Calu3 (cell line): ENCODE measurements at regions of chr18 and their contacts with region 1.

Region 1: DNA sequence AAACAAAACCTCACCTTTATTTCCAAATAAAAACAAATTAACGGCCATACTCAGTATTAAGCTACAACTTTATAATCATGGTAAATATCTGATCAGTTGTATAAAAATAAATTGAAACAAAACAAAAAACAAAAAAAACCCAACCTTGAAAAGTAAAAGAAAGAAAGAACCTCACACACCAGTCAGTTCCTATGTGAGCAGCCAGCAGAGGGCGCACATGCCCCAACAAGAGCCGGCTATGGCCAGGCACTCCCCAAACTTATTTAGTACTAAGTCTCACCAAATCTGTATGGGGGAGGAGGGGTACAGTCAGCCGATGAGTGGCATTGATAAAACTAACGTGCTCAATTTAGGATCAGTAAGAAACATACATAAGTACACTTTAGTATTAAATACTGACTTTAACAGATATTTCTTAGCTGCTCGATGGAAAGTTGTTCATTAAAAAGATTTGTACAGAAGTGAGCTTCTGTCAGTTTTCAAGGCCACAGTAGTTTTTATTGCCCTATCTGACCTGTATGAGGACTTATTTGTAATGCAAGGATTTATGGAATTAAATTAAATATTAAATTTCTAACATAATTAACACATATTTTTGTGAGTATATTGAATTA is 172.6 kb downstream of the TCF4 start:
- DNase-seq: peak; percentile 78
- H3K4me3 Mint-ChIP-seq: no peak overlapping the region
- H3K27ac Mint-ChIP-seq: no peak overlapping the region
- H3K4me1 Mint-ChIP-seq: no peaks in the 10 kb centered on the region
- H3K27me3 Mint-ChIP-seq: no peaks in the 10 kb centered on the region
- CTCF ChIP-seq: peak; percentile 84

Region 2: GRCh38 chr18:55289775-55290174 is 125.6 kb before region 1 on chr18:
- CTCF ChIA-PET with region 1: no interaction called
- intact Hi-C with region 1: no loop called
- DNase-seq: no peak
- H3K4me3 Mint-ChIP-seq: no peak overlapping the region
- H3K27ac Mint-ChIP-seq: no peak overlapping the region
- H3K4me1 Mint-ChIP-seq: no peaks in the 10 kb centered on the region
- H3K27me3 Mint-ChIP-seq: peaks cover 11% of the 10 kb centered on the region
- CTCF ChIP-seq: no peak

Region 3: GRCh38 chr18:55485666-55486065 is 70.3 kb after region 1 on chr18:
- CTCF ChIA-PET with region 1: no interaction called
- intact Hi-C with region 1: no loop called
- DNase-seq: no peak
- H3K4me3 Mint-ChIP-seq: no peak overlapping the region
- H3K27ac Mint-ChIP-seq: no peak overlapping the region
- H3K4me1 Mint-ChIP-seq: no peaks in the 10 kb centered on the region
- H3K27me3 Mint-ChIP-seq: no peaks in the 10 kb centered on the region
- CTCF ChIP-seq: no peak

Region 4: DNA sequence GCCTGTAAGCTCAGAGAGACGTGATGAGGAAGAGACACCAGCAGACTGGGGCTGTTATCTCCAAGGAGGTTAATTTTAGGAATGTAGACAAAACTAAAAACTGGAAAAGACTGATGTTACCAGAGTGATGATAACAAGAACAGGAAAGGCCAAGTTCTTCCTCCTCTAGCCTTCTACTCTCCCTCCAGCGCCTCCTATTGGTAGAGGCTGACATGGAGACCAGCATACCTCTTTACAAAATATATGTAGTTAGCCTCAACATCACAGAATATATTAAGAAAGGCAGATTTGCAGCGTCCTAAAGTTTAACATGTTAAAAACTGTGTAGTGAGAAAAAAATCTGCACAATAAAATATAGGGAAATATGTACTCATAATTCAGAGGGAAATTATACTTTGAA is 106.6 kb after region 1 on chr18:
- CTCF ChIA-PET with region 1: no interaction called
- intact Hi-C with region 1: no loop called
- DNase-seq: peak; percentile 20
- H3K4me3 Mint-ChIP-seq: no peak overlapping the region
- H3K27ac Mint-ChIP-seq: no peak overlapping the region
- H3K4me1 Mint-ChIP-seq: no peaks in the 10 kb centered on the region
- H3K27me3 Mint-ChIP-seq: no peaks in the 10 kb centered on the region
- CTCF ChIP-seq: peak; percentile 35

Region 5: DNA sequence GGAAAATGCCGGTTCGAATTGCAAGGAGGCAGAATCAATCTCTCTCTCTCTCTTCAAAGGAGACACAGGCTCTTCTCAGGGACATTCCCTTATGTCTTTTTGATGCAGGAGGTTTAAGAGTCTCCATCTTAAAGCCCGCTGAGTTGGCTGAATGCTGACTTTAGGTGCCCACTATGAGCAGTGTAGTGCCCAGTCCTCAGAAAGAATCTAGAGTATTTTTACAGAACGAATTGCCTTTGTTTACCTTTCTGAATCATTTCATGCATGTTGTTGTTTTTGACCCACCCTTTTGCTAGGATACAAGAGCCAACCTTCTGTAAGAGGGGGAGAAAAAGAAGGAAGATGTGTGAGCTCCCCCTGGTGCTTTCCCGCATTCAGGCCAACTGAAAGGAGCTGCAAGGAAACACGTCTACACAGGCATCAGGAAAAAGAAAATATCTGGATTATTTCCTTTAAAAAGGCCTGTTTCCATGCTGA is 366.2 kb after region 1 on chr18:
- CTCF ChIA-PET with region 1: no interaction called
- intact Hi-C with region 1: loop called (anchors 1 kb)
- DNase-seq: peak; percentile 40
- H3K4me3 Mint-ChIP-seq: no peak overlapping the region
- H3K27ac Mint-ChIP-seq: no peak overlapping the region
- H3K4me1 Mint-ChIP-seq: no peaks in the 10 kb centered on the region
- H3K27me3 Mint-ChIP-seq: no peaks in the 10 kb centered on the region
- CTCF ChIP-seq: peak; percentile 50

Region 6: DNA sequence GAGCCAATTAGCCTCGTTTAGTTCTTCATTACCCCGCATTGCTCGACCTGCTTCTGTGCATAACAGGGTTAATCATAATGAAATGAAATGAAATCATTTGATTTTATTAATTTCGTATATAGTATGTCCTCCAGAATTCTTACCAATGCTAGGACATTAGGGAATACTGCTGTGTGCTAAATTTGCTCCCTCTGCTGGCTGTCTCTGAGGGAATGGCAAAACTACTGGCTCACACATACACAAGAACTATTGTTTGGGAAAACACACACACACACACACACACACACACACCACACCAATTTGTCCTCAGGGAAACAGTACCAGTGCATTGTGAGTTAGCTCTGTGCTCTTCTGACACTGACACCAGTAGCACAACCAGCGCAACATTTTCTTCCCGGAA is 445.9 kb after region 1 on chr18:
- CTCF ChIA-PET with region 1: no interaction called
- intact Hi-C with region 1: loop called (anchors 5 kb)
- DNase-seq: peak; percentile 29
- H3K4me3 Mint-ChIP-seq: no peak overlapping the region
- H3K27ac Mint-ChIP-seq: no peak overlapping the region
- H3K4me1 Mint-ChIP-seq: peaks cover 9% of the 10 kb centered on the region
- H3K27me3 Mint-ChIP-seq: peaks cover 8% of the 10 kb centered on the region
- CTCF ChIP-seq: no peak

Region 7: DNA sequence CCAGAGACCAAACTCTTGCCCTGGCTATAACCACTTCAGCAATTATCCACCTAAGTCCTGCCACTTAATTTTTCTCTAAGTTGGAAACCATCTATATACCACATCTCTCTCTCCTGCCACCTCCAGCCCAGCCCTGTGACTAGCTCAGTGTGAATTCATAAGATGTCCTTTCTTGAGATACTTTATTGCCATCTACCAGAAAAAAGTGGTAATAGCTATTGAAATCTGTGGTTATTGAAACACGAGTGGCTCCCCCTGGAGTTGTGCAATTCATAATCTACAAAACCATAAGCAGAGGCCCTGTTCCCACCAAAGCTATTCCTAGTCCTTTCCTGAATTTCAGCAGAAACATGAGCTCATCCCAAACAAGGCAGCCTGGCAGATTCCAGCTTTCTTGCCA is 899.0 kb after region 1 on chr18:
- CTCF ChIA-PET with region 1: no interaction called
- intact Hi-C with region 1: loop called (anchors 10 kb)
- DNase-seq: no peak
- H3K4me3 Mint-ChIP-seq: no peak overlapping the region
- H3K27ac Mint-ChIP-seq: no peak overlapping the region
- H3K4me1 Mint-ChIP-seq: no peaks in the 10 kb centered on the region
- H3K27me3 Mint-ChIP-seq: peaks cover 54% of the 10 kb centered on the region
- CTCF ChIP-seq: no peak

Region 8: GRCh38 chr18:56575819-56576663 is 1160.7 kb after region 1 on chr18:
- CTCF ChIA-PET with region 1: no interaction called
- intact Hi-C with region 1: loop called (anchors 1 kb)
- DNase-seq: peak; percentile 40
- H3K4me3 Mint-ChIP-seq: no peak overlapping the region
- H3K27ac Mint-ChIP-seq: no peak overlapping the region
- H3K4me1 Mint-ChIP-seq: no peaks in the 10 kb centered on the region
- H3K27me3 Mint-ChIP-seq: no peaks in the 10 kb centered on the region
- CTCF ChIP-seq: peak; percentile 67